Prostate gland (tissue), 2 donors: ENCODE measurements at regions of chr1 and their contacts with region 1.

Region 1: GRCh38 chr1:43293896-43294760 is 6.7 kb upstream of the TIE1 start:
- DNase-seq: peak; percentile 47
- H3K4me3 ChIP-seq: no peak overlapping the region
- H3K27ac ChIP-seq: peak overlapping the region; percentile 79 to 83
- H3K4me1 ChIP-seq: peaks cover 3% of the 10 kb centered on the region
- H3K27me3 ChIP-seq: no peaks in the 10 kb centered on the region
- CTCF ChIP-seq: no peak
- POLR2A ChIP-seq: peak; percentile 18

Region 2: DNA sequence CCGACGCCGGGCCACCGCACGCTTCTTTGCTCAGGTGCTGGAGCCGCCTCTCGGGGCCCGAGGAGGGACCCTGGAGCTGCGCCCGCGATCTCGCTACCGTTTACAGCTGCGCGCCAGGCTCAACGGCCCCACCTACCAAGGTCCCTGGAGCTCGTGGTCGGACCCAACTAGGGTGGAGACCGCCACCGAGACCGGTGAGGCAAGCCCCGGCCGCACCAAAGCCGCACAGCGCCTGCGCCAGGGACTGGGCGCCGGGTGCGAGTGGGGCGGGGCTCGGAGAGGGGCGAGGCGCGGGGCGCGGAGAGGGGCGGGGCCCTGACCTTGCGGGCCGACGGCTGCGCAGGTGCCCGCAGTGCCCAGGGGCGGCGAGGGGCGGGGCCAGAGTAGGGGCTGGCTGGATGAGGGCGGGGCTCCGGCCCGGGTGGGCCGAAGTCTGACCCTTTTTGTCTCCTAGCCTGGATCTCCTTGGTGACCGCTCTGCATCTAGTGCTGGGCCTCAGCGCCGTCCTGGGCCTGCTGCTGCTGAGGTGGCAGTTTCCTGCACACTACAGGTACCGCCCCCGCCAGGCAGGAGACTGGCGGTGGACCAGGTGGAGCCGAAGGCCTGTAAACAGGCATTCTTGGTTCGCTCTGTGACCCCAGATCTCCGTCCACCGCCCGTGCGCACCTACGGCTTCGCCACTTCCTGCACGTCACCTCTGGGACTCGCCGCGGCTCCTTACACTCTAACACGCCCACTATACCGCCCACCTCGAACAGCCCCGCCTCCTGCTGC is 54.9 kb after region 1 on chr1:
- intact Hi-C with region 1: loop called (anchors 2 kb)
- DNase-seq: peak; percentile 87
- H3K4me3 ChIP-seq: peak overlapping the region; percentile 45 to 52
- H3K27ac ChIP-seq: peak overlapping the region; percentile 96 to 97
- H3K4me1 ChIP-seq: no peaks in the 10 kb centered on the region
- H3K27me3 ChIP-seq: no peaks in the 10 kb centered on the region
- CTCF ChIP-seq: peak in 1 of 4 experiments; percentile 11
- POLR2A ChIP-seq: peak; percentile 74